Panc1 (cell line): ENCODE measurements at regions of chr2 and their contacts with region 1.

Region 1: GRCh38 chr2:211867845-211868451 is 670.7 kb downstream of the ERBB4 start:
- DNase-seq: no peak
- ATAC-seq: no peak
- H3K4me3 ChIP-seq: no peak overlapping the region
- H3K27ac ChIP-seq: no peak overlapping the region
- H3K4me1 ChIP-seq: no peaks in the 10 kb centered on the region
- H3K27me3 ChIP-seq: no peaks in the 10 kb centered on the region
- CTCF ChIP-seq: no peak

Region 2: GRCh38 chr2:210046851-210047500 is 1821.0 kb before region 1 on chr2:
- CTCF ChIA-PET with region 1: no interaction called
- POLR2A ChIA-PET with region 1: interaction called, 15 read pairs
- in situ Hi-C with region 1: no loop called
- intact Hi-C with region 1: no loop called
- DNase-seq: no peak
- ATAC-seq: no peak
- H3K4me3 ChIP-seq: no peak overlapping the region
- H3K27ac ChIP-seq: no peak overlapping the region
- H3K4me1 ChIP-seq: no peaks in the 10 kb centered on the region
- H3K27me3 ChIP-seq: no peaks in the 10 kb centered on the region
- CTCF ChIP-seq: no peak

Region 3: GRCh38 chr2:211881449-211881848 is 13.5 kb after region 1 on chr2:
- CTCF ChIA-PET with region 1: no interaction called
- POLR2A ChIA-PET with region 1: interaction called, 11 read pairs
- in situ Hi-C with region 1: no loop called
- intact Hi-C with region 1: no loop called
- DNase-seq: no peak
- ATAC-seq: no peak
- H3K4me3 ChIP-seq: no peak overlapping the region
- H3K27ac ChIP-seq: no peak overlapping the region
- H3K4me1 ChIP-seq: no peaks in the 10 kb centered on the region
- H3K27me3 ChIP-seq: no peaks in the 10 kb centered on the region
- CTCF ChIP-seq: no peak